Activated B cell treated with CpG ODN at 0.5 μM for 24 hours (primary cell): ENCODE measurements at regions of chr10 and their contacts with region 1.

Region 1: GRCh38 chr10:92880233-92880861 is 32.0 kb downstream of the EXOC6 start:
- DNase-seq: no peak
- ATAC-seq: peak; percentile 70
- H3K4me3 Mint-ChIP-seq: no peak overlapping the region
- H3K27ac Mint-ChIP-seq: no peak overlapping the region
- H3K4me1 Mint-ChIP-seq: peaks cover 23% of the 10 kb centered on the region
- H3K27me3 Mint-ChIP-seq: no peaks in the 10 kb centered on the region
- CTCF ChIP-seq: no peak

Region 2: GRCh38 chr10:92517034-92517655 is 363.2 kb before region 1 on chr10:
- CTCF ChIA-PET with region 1: interaction called, 20 read pairs
- POLR2A ChIA-PET with region 1: no interaction called
- intact Hi-C with region 1: loop called (anchors 1 kb)
- DNase-seq: no peak
- ATAC-seq: peak; percentile 88
- H3K4me3 Mint-ChIP-seq: no peak overlapping the region
- H3K27ac Mint-ChIP-seq: no peak overlapping the region
- H3K4me1 Mint-ChIP-seq: peaks cover 6% of the 10 kb centered on the region
- H3K27me3 Mint-ChIP-seq: no peaks in the 10 kb centered on the region
- CTCF ChIP-seq: peak; percentile 30

Region 3: GRCh38 chr10:92627845-92628480 is 252.4 kb before region 1 on chr10:
- CTCF ChIA-PET with region 1: interaction called, 6 read pairs
- POLR2A ChIA-PET with region 1: no interaction called
- intact Hi-C with region 1: loop called (anchors 1 kb)
- DNase-seq: no peak
- ATAC-seq: peak; percentile 31
- H3K4me3 Mint-ChIP-seq: no peak overlapping the region
- H3K27ac Mint-ChIP-seq: no peak overlapping the region
- H3K4me1 Mint-ChIP-seq: no peaks in the 10 kb centered on the region
- H3K27me3 Mint-ChIP-seq: no peaks in the 10 kb centered on the region
- CTCF ChIP-seq: no peak

Region 4: DNA sequence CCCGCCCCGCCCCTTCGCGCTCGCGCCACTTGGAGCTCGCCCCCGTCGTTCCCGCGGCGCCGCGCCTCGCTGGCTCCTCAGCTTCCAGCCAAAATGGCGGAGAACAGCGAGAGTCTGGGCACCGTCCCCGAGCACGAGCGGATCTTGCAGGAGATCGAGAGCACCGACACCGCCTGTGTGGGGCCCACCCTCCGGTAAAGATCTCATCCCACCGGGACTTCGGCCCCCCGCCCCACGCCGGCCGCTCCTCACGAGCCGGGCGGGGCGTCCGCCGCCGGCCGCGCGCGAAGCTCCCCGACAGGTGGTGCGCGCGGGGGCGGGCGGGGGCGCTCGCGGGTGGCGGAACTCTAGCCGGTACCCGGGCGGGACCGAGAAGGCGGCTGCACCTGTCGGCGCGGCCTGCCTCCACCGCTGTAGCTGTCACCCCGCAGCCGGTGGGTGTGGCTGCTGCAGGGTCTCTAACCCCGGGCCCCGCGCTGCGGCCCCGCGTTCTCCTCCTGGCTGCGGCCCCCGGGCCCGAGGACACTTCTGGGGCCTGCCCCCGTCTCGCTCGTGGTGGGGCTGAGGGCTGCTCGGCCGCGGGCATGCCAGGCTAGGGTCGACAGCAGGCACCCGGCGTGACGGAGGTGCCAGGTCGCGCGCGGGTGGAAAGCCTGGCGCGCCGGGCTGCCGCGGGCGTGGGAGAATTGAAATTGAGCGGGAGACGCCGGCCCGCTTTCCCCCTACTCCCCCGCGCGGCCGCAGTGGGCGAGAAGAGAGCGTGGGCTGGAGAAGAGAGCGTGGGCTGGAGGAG is 31.7 kb before region 1 on chr10 and contains the start of gene EXOC6:
- CTCF ChIA-PET with region 1: interaction called, 10 read pairs
- POLR2A ChIA-PET with region 1: interaction called, 4 read pairs
- intact Hi-C with region 1: loop called (anchors 1 kb)
- DNase-seq: peak; percentile 89
- ATAC-seq: peak; percentile 84
- H3K4me3 Mint-ChIP-seq: peak within 1 kb of the TSS; percentile 87
- H3K27ac Mint-ChIP-seq: peak within 1 kb of the TSS; percentile 87
- H3K4me1 Mint-ChIP-seq: peaks cover 34% of the 10 kb centered on the region
- H3K27me3 Mint-ChIP-seq: no peaks in the 10 kb centered on the region
- CTCF ChIP-seq: no peak
- total RNA-seq, gene EXOC6: 15.3 and 17.3 TPM in 2 replicates

Region 5: DNA sequence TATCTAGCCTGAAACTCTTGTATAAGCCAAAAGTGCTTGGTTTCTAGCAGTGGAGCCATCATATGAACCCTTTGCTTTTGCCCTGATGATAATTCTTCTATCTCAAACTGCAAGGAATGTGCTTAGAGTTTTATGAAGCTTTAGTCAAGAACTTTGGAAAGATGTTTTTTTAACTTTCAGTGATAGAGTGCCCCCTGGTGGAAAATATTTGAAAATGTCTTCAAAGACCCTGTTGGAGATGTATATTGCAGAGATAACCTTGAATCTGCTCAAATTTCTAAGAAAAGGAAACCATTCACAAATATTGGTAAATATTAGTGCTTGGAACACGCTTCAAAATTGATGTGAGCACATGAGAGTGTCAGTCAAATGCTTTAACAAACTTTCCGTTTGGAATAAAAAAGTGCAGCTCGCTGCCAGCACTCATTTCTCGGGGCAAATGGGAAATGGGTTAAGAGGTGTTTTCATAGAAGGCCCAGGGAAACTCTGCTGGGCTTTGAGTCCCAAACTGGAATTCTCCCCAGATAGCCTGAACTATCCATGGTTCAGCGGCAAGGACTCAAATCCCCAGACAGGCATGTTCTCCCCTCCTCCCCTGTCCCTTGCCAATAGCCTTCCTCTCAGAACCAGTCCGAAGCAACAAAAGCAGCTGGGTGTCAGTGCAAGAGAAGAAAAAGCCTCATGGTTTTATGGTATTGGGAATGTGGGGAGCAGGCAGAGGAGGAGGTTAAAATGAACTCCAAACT is 472.5 kb after region 1 on chr10:
- CTCF ChIA-PET with region 1: interaction called, 10 read pairs
- POLR2A ChIA-PET with region 1: no interaction called
- intact Hi-C with region 1: loop called (anchors 1 kb)
- DNase-seq: no peak
- ATAC-seq: no peak
- H3K4me3 Mint-ChIP-seq: no peak overlapping the region
- H3K27ac Mint-ChIP-seq: no peak overlapping the region
- H3K4me1 Mint-ChIP-seq: no peaks in the 10 kb centered on the region
- H3K27me3 Mint-ChIP-seq: peaks cover 12% of the 10 kb centered on the region
- CTCF ChIP-seq: peak; percentile 52